ENCODE measurements at regions of chr1 and their contacts with region 1.

Region 1: GRCh38 chr1:44652445-44653106 is 21.7 kb downstream of the TMEM53 start:
- DNase-seq: peak; percentile 70
- ATAC-seq: peak; percentile 98
- H3K4me3 Mint-ChIP-seq: no peak overlapping the region
- H3K27ac Mint-ChIP-seq: peak overlapping the region; percentile 73
- H3K4me1 Mint-ChIP-seq: no peaks in the 10 kb centered on the region
- H3K27me3 Mint-ChIP-seq: no peaks in the 10 kb centered on the region
- CTCF ChIP-seq: peak; percentile 28

Region 2: DNA sequence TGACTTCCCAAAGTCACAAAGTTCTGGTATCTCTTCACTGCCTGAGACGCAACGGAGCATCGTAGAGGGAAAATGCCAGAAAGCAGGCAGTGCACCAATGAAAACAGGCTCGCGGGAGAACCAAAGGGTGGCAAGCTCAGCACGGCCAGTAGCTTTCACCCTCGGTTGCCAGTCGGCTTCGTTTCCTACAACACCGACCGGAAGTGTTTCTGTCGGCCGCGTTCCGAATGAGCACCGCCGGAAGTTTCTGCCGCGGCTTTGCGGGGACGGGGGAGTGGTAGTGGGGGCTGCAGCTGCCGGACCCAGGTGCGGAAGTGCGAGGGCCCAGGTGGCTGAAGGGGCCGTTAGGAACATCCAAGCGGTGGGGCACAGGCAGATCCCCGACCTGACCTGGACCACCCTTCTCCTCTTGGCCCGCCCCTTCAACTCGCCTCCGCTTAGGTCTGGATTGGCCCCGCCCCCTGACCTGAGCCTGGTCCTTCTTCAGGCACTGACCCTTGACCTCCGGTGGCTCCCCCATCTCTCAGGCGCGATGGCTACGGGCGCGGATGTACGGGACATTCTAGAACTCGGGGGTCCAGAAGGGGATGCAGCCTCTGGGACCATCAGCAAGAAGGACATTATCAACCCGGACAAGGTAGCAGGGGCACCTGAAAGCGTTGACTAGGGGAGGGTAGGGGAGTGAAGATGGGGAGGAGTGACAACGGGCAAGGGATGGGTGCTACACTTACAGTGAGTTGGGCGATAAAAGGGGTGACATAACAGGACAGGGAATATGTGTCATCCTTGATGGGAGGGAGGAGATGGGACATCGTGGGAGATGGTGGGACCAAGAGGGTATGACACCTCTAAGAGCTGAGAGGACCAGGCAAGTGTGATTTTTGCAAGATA is 439.1 kb before region 1 on chr1 and contains the start of gene DMAP1:
- CTCF ChIA-PET with region 1: interaction called, 15 read pairs
- POLR2A ChIA-PET with region 1: no interaction called
- intact Hi-C with region 1: loop called (anchors 1 kb)
- DNase-seq: peak; percentile 87
- ATAC-seq: peak; percentile 83
- H3K4me3 Mint-ChIP-seq: peak within 1 kb of the TSS; percentile 95
- H3K27ac Mint-ChIP-seq: peak within 1 kb of the TSS; percentile 91
- H3K4me1 Mint-ChIP-seq: peaks cover 38% of the 10 kb centered on the region
- H3K27me3 Mint-ChIP-seq: no peaks in the 10 kb centered on the region
- CTCF ChIP-seq: no peak
- total RNA-seq, gene DMAP1: 59.6 and 64.7 TPM in 2 replicates

Region 3: GRCh38 chr1:44377925-44378784 is 274.4 kb before region 1 on chr1:
- CTCF ChIA-PET with region 1: interaction called, 22 read pairs
- POLR2A ChIA-PET with region 1: no interaction called
- intact Hi-C with region 1: loop called (anchors 1 kb)
- DNase-seq: no peak
- ATAC-seq: peak; percentile 45
- H3K4me3 Mint-ChIP-seq: no peak overlapping the region
- H3K27ac Mint-ChIP-seq: no peak overlapping the region
- H3K4me1 Mint-ChIP-seq: no peaks in the 10 kb centered on the region
- H3K27me3 Mint-ChIP-seq: peaks cover 2% of the 10 kb centered on the region
- CTCF ChIP-seq: no peak

Region 4: DNA sequence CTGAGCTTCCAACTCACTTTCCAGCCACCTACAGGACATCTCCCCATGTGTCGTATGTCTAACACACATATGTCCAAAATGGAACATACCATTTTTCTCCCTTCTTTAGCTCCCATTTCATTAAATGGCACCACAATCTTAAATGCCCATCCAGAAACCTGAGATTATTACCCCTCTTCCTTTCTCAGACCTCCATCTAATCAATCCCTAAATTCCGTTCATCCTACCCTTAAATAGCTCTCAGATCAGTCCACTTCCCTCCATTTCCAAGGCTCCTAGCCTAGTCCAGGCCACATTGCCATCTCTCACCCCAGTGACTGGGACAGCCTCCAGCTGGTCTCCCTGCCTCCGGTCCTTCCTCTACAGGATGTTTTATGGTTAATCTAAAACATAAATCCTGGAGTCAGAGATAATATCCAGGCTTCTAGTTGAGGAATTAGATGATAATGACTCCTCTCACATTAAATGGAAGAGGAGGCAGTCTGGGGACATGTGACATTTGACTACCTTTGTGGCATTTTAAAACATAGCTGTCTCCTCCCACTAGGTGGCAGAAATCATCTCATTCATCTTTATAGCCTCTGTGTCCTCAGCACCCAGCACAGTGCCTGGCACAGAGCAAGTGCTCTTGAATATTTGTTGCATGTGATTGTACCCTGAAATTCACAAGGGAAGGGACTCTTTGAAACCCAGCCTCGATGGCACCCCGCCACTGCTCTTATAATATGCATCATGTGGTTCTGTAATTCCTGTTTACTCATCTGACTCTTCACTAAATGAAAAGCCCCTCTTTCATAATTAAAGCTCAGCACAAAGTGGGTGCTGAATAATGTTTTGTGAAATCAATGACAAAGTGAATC is 80.6 kb before region 1 on chr1:
- CTCF ChIA-PET with region 1: interaction called, 41 read pairs
- POLR2A ChIA-PET with region 1: no interaction called
- intact Hi-C with region 1: loop called (anchors 1 kb)
- DNase-seq: no peak
- ATAC-seq: no peak
- H3K4me3 Mint-ChIP-seq: no peak overlapping the region
- H3K27ac Mint-ChIP-seq: no peak overlapping the region
- H3K4me1 Mint-ChIP-seq: no peaks in the 10 kb centered on the region
- H3K27me3 Mint-ChIP-seq: peaks cover 15% of the 10 kb centered on the region
- CTCF ChIP-seq: no peak

Region 5: DNA sequence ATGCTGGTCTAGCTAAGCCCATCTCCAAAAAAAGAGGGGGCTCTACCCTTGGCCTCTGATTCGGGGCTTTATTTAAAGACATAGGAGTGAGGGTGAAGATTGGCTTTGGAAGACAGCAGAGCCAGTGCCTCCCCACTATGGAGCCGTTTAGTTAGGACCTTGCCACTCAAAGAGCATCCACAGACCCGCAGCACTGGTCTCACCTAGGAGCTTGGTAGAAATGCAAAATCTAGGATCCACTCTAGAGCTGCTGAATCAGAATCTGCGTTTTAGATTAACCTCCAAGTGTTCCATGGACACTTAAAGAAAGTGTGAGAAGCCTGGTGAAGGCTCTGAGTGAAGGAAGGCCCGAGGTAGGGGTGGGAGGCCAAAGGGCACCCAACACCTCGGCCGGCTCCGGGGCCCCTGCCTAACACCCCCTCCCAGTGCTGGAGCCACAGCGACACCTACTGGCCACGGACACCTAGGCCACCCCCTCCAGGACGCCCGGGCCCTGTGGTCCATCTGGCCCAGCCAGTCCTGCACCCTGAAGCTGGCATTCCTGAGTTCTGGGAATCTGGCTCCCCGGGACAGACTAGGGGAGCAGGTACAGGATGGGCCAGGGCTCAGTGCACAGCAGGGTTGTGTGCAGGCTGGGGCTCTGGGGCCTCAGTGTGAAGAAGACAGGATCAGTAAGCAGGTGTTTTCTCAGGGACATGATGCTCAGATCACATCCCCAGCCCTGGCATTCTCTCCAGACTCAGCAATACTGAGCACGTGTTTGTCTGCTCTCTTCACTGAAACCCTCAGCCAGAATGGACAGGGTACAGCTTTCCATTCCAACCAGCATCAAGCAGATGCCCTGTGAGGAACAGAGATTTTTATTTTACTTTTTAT is 57.5 kb before region 1 on chr1:
- CTCF ChIA-PET with region 1: interaction called, 10 read pairs
- POLR2A ChIA-PET with region 1: no interaction called
- intact Hi-C with region 1: no loop called
- DNase-seq: peak; percentile 74
- ATAC-seq: peak; percentile 92
- H3K4me3 Mint-ChIP-seq: no peak overlapping the region
- H3K27ac Mint-ChIP-seq: no peak overlapping the region
- H3K4me1 Mint-ChIP-seq: no peaks in the 10 kb centered on the region
- H3K27me3 Mint-ChIP-seq: peaks cover 6% of the 10 kb centered on the region
- CTCF ChIP-seq: no peak

Region 6: GRCh38 chr1:44609412-44609767 is 43.2 kb before region 1 on chr1:
- CTCF ChIA-PET with region 1: interaction called, 27 read pairs
- POLR2A ChIA-PET with region 1: no interaction called
- intact Hi-C with region 1: loop called (anchors 1 kb)
- DNase-seq: no peak
- ATAC-seq: no peak
- H3K4me3 Mint-ChIP-seq: no peak overlapping the region
- H3K27ac Mint-ChIP-seq: no peak overlapping the region
- H3K4me1 Mint-ChIP-seq: no peaks in the 10 kb centered on the region
- H3K27me3 Mint-ChIP-seq: peaks cover 4% of the 10 kb centered on the region
- CTCF ChIP-seq: no peak

Region 7: GRCh38 chr1:44696789-44697345 is 44.3 kb after region 1 on chr1:
- CTCF ChIA-PET with region 1: interaction called, 11 read pairs
- POLR2A ChIA-PET with region 1: interaction called, 3 read pairs
- intact Hi-C with region 1: no loop called
- DNase-seq: peak; percentile 30
- ATAC-seq: peak; percentile 70
- H3K4me3 Mint-ChIP-seq: peak overlapping the region; percentile 55
- H3K27ac Mint-ChIP-seq: peak overlapping the region; percentile 84
- H3K4me1 Mint-ChIP-seq: peaks cover 52% of the 10 kb centered on the region
- H3K27me3 Mint-ChIP-seq: no peaks in the 10 kb centered on the region
- CTCF ChIP-seq: no peak

Measured in activated B cell treated with CpG ODN at 0.5 μM for 24 hours (primary cell).